Activated CD8-positive, alpha-beta memory T cell treated with anti-CD3 and anti-CD28 coated beads, Interleukin-2, amount 10 ng/mL, durations not matched to agents 7 days and 5 days (primary cell): ENCODE measurements at regions of chr2 and their contacts with region 1.

Region 1: DNA sequence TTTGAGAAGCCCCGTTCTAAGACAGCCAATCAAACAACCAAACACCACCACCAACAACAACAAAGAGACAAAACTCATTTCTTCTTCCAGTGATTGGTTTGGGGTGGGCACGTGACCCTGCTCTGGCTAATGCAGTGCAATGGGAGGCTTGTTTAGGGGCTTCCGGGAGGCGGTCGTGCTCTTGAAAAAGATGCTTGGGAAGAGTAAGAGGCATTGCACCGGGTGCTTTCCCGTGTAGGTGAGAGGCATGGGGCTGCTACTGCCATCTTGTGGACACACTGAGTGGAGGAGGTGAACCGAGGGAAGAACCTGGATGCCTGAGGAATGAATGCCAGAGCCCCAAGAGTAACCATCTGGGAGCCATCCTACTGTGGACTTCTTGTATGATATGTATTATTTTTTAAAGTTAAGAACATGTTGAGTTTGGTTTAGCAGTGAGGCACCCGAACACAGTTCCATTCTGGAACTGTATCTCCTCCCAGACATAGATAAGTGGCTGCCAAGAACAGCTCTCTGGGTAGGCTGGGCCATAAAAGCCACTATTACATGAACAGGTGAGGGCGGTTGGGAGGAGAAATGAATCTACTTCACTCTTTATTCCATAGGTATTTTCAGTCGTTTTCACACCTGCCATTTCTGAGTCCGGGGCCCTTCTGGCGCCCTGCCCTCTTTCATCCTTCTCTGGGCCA is 19.1 kb upstream of the ARHGAP25 start:
- DNase-seq: peak; percentile 68
- ATAC-seq: peak; percentile 17
- H3K4me3 Mint-ChIP-seq: peak overlapping the region; percentile 27
- H3K27ac Mint-ChIP-seq: peak overlapping the region; percentile 78
- H3K4me1 Mint-ChIP-seq: peaks cover 75% of the 10 kb centered on the region
- H3K27me3 Mint-ChIP-seq: no peaks in the 10 kb centered on the region

Region 2: DNA sequence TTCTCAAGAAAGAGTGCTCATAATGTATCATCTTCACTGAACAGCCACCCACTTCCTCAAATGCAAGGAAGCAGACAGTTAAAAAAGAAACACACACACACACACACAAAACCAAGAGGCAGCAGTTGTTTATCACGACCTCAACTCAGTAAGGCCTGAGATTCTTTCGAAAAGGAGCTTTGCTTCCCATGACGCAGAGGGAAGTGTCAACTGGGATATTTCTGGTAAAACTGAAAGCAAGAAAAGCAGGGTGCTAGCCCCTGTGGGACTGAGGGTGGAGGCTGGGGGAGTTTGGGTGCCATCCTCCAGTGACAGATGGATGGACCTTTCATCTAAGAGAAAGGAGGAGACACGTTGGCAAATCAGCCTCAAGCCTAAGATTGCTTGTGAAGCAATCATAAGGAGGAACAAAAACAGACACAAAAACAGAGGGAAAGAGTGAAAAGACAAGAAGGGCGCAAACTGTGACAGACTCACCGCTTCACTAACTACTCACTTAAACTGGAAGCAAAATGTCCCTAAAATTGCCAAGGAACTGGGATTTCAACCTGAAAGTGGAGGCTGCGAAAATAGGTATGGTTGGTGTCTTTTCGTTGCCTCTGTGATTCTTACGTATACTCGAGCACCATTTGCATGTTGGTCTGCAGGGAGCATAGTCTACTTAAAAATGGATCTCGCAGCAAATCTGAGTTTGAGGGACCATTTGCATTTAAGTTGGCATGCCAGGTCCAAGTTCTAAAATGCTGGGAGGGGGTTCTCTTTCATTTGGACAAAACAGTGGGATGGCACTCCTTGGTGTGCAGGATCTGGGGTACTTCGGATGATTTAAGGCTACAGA is 19.4 kb after region 1 on chr2 and contains the start of gene ARHGAP25:
- CTCF ChIA-PET with region 1: interaction called, 35 read pairs
- DNase-seq: peak; percentile 80
- ATAC-seq: peak; percentile 64
- H3K4me3 Mint-ChIP-seq: no peak within 1 kb of the TSS
- H3K27ac Mint-ChIP-seq: no peak within 1 kb of the TSS
- H3K4me1 Mint-ChIP-seq: peaks cover 35% of the 10 kb centered on the region
- H3K27me3 Mint-ChIP-seq: no peaks in the 10 kb centered on the region
- total RNA-seq, gene ARHGAP25: 90.2 to 126 TPM

Region 3: DNA sequence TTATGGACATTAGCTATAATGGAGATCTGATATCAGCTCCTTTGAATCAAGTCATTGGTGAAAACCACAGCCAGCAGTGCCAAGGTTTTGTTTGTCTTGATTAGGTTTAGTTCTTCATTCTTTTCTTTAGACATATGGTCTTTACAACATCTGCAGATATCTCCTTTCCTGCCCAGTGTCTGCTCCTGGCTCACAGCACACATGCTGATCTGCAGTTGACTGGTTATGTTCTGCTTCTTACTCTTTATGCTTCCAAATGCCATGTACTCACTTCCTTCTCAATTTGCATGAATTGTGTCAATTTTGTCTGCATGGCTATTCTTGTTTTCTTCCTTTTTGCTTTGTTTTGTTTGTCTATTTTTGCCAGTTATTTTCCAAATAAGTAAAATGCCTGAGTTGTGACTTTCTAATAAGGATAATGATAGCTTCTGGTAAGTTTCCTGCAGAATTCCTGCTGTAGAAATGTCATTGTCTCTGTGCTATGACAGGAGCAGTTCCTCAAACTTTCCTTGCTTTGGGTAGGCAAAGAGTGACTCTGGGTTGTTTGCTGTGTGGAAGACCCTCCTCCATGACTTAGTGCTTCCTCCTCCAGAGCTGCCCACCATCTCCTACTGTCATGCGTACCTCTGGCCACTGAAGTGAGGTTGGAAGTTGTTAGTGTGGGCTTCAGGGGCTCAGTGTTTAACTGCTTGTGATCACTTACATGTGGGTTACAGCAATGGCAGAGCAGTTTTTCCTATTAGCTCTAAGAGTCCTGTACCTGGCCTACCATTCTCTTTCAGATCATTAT is 27.3 kb after region 1 on chr2:
- CTCF ChIA-PET with region 1: interaction called, 35 read pairs
- DNase-seq: peak; percentile 39
- ATAC-seq: no peak
- H3K4me3 Mint-ChIP-seq: peak overlapping the region; percentile 31
- H3K27ac Mint-ChIP-seq: peak overlapping the region; percentile 65
- H3K4me1 Mint-ChIP-seq: peaks cover 89% of the 10 kb centered on the region
- H3K27me3 Mint-ChIP-seq: no peaks in the 10 kb centered on the region

Region 4: DNA sequence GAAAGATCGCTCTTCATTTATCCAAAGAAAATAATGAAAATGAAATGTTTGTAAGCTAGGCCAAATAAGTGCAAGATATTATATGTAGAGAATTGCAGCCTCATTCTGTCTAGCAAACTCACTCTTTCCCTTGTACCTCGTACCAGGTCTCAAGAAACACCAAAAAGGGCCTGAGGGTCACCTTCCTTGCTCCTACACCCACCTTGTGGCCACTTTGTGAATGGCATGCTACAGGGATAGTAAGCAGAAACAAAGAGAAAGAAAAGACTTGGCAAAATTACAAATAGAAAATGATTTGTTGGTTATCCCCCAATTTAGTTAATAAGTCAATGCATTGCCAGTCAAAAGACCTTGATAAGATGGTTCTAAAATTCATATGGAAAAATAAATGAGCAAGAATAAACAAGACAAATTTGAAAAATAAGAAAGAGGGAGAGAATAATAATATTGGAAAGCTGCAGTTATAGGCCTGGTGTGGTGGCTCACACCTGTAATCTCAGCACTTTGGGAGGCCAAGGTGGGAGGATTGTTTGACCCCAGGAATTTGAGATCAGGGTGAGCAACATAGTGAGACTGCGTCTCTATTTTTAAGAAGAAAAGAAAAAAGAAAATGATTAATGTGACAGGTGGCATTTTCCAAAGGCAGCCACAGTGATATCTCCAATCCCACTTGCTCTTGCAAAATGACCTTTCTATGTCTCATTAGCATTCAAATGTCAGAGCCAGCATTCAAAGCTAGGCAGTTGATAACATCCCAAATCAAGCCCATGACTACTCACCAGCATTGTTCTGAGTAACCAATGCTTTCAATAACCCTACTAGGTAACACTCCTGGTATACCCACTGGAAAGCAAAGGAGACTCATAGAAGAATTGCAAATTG is 194.5 kb after region 1 on chr2:
- CTCF ChIA-PET with region 1: interaction called, 42 read pairs
- DNase-seq: peak; percentile 89
- ATAC-seq: no peak
- H3K4me3 Mint-ChIP-seq: no peak overlapping the region
- H3K27ac Mint-ChIP-seq: peak overlapping the region; percentile 77
- H3K4me1 Mint-ChIP-seq: peaks cover 40% of the 10 kb centered on the region
- H3K27me3 Mint-ChIP-seq: no peaks in the 10 kb centered on the region